Brain microvascular endothelial cell (primary cell): ENCODE measurements at regions of chr16 and their contacts with region 1.

Region 1: GRCh38 chr16:20383106-20384029 is 21.2 kb downstream of the PDILT start:
- DNase-seq: peak; percentile 73
- H3K4me3 ChIP-seq: no peak overlapping the region
- H3K27ac ChIP-seq: no peak overlapping the region
- H3K27me3 ChIP-seq: no peaks in the 10 kb centered on the region
- CTCF ChIP-seq: peak; percentile 87

Region 2: DNA sequence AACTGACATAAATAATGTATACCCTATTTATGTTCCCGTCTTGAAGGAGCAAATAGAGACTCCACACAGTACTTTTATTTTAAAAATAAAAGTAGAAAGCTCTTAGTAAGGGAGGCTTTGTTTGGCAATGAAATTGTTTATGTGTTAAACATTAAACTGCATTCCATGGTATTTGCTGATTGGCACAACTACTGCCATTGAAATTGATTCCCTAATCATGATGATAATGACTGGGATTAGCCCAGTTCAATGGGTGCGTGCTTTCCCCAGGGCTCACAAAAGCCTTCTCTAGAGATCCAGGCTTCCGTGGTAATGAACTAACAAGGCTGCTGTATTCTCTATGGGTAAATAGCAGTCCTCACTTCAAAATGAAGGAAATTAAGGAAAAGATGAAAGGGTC is 566.2 kb before region 1 on chr16:
- in situ Hi-C with region 1: no loop called
- DNase-seq: no peak
- H3K4me3 ChIP-seq: no peak overlapping the region
- H3K27ac ChIP-seq: no peak overlapping the region
- H3K27me3 ChIP-seq: no peaks in the 10 kb centered on the region
- CTCF ChIP-seq: no peak

Region 3: DNA sequence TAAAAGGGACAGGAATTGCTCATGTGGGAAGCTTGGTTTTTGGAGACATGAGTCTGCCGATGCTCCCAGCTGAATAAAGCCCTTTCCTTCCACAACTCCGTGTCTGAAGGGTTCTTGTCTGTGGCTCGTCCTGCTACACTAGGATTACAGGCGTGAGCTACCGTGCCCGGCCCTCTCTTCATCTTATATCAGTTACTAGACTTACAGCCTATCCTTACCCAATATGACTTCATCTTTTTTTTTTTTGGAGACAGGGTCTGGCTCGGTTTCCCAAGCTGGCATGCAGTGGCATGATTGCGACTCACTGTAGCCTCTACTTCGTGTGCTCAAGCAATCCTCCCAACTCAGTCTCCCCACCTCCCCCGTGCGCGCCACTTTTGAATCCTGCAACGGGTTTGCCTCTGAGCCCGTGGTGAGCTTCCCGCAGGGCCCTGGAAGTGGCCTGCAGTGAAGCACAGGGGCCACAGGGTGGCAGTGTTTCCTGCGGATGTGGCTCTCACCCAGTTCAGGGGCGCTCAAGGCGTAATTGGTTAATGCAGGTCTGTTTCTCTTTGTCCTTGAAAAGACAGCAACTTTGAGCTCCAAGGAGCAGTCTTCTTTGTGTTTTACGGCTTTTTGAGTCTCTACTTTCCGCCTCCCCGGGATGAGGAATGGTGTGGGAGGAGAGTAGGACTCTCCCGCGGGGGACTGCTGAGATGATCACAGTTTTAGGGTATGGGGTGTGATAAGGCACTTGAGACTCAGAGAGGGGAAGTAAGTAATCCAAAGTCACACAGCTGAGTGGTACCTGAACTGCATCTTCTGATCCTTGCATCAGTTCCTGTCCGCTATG is 476.0 kb before region 1 on chr16:
- in situ Hi-C with region 1: loop called (anchors 25 kb)
- DNase-seq: peak; percentile 68
- H3K4me3 ChIP-seq: no peak overlapping the region
- H3K27ac ChIP-seq: no peak overlapping the region
- H3K27me3 ChIP-seq: no peaks in the 10 kb centered on the region
- CTCF ChIP-seq: peak; percentile 100

Region 4: DNA sequence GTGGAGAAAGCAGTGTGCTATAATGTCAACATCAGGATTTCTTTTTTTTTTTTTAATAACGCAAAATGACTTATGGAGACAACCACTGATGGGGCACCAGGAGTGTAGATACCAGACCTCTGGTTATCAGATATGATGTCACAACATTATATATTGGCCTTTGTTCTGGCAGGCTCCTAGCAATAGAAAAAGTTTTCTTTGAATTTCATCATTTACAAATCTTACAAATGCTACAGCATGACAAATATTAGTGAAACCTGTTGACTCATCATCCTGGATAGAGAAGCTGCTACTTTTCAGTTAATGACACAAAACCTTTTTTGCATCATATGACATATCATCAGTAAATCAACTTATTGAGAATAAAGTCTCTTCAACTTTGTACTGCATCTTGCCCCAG is 352.1 kb after region 1 on chr16:
- in situ Hi-C with region 1: no loop called
- DNase-seq: no peak
- H3K4me3 ChIP-seq: no peak overlapping the region
- H3K27ac ChIP-seq: no peak overlapping the region
- H3K27me3 ChIP-seq: no peaks in the 10 kb centered on the region
- CTCF ChIP-seq: no peak